Sciatic nerve (tissue), 2 donors: ENCODE measurements at regions of chr1 and their contacts with region 1.

Region 1: GRCh38 chr1:224157316-224157715 is 25.7 kb upstream of the DEGS1 start:
- DNase-seq: no peak
- ATAC-seq: no peak

Region 2: GRCh38 chr1:222357252-222357651 is 1800.1 kb before region 1 on chr1:
- intact Hi-C with region 1: no loop called
- DNase-seq: no peak
- ATAC-seq: no peak

Region 3: DNA sequence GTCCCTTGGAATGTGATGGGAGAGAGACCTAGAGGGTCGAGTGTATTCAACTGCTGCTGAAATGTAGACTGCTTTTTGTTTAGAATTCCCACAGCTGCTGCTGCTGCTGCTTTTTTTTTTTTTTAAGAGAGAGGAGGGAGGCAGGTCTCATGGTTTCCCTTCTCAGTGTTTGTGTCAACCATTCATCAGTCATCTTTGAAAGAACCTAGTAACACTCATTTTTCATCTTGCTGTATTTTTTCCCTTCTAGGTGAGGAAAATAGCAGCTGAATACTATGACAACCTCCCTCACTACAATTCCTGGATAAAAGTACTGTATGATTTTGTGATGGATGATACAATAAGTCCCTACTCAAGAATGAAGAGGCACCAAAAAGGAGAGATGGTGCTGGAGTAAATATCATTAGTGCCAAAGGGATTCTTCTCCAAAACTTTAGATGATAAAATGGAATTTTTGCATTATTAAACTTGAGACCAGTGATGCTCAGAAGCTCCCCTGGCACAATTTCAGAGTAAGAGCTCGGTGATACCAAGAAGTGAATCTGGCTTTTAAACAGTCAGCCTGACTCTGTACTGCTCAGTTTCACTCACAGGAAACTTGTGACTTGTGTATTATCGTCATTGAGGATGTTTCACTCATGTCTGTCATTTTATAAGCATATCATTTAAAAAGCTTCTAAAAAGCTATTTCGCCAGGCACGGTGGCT is 34.9 kb after region 1 on chr1:
- intact Hi-C with region 1: loop called (anchors 2 kb)
- DNase-seq: no peak
- ATAC-seq: no peak

Region 4: GRCh38 chr1:224203243-224204016 is 46.1 kb after region 1 on chr1:
- intact Hi-C with region 1: no loop called
- DNase-seq: peak; percentile 72
- ATAC-seq: peak; percentile 83

Region 5: DNA sequence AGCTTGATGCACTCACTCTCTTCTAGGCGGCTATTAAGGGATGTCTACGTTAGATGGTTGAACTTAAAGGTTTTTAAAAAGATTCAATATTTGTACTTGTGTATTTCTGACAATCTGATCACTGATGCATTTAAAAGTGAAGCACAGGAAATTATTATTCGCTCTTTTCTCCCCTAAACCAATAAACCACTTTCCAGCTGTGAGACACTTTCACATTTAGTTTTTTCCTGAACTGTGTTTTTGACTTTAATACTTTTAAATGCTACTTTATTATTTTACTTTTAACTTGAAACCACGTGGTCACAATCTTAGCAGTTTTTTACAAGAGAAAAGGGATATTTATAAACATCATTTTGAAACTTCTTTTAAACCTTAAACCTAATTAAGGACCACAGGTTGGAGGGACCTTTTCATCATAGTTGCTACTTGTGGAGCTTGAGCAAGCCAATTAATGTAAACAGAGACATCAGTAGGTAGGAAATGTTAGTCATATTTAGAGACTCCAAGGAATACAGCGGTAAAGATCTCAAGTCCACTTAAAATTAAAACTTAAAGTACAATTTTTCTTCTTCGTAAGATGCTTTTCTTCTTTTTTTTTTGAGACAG is 268.1 kb after region 1 on chr1:
- intact Hi-C with region 1: no loop called
- DNase-seq: no peak
- ATAC-seq: no peak

Region 6: GRCh38 chr1:224656392-224656791 is 499.1 kb after region 1 on chr1:
- intact Hi-C with region 1: no loop called
- DNase-seq: no peak
- ATAC-seq: no peak